Motor neuron (in vitro differentiated cells): ENCODE measurements at regions of chr7 and their contacts with region 1.

Region 1: DNA sequence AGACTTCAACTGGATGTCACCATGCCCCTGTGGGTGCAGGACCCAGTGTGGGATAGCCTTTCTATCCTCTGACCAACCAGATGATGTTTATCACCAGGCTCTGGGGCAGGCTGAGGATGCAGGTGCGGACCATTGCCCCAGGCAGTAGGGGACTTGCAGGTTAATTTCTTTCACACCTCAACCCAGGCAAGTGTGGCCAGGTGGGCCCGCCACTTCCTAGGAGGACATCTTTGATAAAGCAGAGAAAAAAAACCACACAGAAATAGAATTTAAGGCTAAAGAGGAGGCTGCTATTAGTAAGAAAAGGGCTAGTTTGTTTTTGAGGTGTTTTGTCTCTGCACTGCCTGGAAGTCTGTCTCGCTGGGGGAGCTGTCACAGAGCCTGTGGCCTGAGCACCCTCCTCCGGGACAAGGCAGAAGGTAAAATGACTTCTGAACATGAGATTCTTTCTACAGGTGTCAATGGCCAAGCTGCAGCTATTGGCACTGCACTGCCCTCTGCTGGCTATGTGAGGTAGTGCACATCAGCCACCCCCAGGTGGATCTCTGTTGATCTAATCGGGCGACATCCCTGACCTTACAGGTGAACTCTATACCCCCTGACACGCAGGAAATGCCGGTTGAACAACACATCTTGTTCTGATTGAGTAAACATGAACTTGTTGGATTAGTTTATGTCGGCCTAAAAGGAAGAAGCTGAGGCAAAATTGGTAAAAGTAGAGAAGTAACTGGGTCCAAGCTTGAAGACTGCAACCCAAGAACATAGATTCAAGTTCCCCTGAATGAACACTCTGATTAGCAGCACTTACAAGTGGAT is 21.0 kb downstream of the UPP1 start:
- ATAC-seq: peak; percentile 12 to 75 (median 56)
- H3K4me3 ChIP-seq: no peak overlapping the region
- H3K27ac ChIP-seq: no peak overlapping the region
- H3K4me1 ChIP-seq: no peaks in the 10 kb centered on the region

Region 2: GRCh38 chr7:47807756-47808155 is 302.3 kb before region 1 on chr7:
- in situ Hi-C with region 1: no loop called
- ATAC-seq: peak in 1 of 8 experiments; percentile 16
- H3K4me3 ChIP-seq: no peak overlapping the region
- H3K27ac ChIP-seq: no peak overlapping the region
- H3K4me1 ChIP-seq: peaks cover 0 to 4% of the 10 kb centered on the region in 2 donors

Region 3: GRCh38 chr7:47945261-47946001 is 164.6 kb before region 1 on chr7:
- in situ Hi-C with region 1: loop called in 1 of 9 experiments (anchors 25 kb)
- ATAC-seq: peak in 7 of 8 experiments; percentile 14 to 85 (median 59)
- H3K4me3 ChIP-seq: no peak overlapping the region
- H3K27ac ChIP-seq: no peak overlapping the region
- H3K4me1 ChIP-seq: peaks cover 1 to 4% of the 10 kb centered on the region in 2 donors

Region 4: GRCh38 chr7:48035301-48035966 is 74.6 kb before region 1 on chr7 and contains the start of gene C7orf57:
- in situ Hi-C with region 1: no loop called
- ATAC-seq: peak; percentile 96 to 100 (median 99)
- H3K4me3 ChIP-seq: peak within 1 kb of the TSS; percentile 46 to 67 (median 58)
- H3K27ac ChIP-seq: no peak within 1 kb of the TSS
- H3K4me1 ChIP-seq: no peaks in the 10 kb centered on the region
- total RNA-seq, gene C7orf57: 0.22 to 9.1 (median 0.42) TPM in 4 of 8 experiments, not detected in the others